Activated B cell treated with CpG ODN at 0.5 μM for 24 hours (primary cell): ENCODE measurements at regions of chr7 and their contacts with region 1.

Region 1: DNA sequence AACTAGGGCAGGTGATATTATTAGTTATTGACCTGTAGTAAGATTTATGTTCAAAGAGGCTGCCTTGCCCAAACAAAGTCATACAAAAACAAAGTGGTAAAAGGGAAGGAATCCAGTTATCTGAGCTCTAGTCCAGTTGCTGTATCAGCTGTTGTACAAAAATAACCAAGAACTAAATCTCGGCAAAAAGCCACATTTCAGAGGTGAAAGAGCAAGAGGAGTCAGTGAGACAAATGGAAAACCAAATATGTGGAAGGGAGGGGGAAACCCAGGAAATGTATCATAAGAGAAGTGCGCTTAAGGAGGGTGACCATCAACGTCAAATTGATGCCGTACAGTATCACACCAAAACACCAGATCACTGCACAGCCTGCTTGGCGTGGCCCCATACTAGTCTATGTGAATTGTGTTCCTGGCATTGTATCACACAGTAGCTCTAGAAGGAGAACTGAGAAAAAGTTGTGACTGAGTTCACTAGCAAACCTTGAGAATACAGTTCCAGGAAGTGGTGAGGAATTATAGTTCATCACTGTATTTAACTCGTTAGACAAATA is 6.4 kb downstream of the AGBL3 start:
- DNase-seq: no peak
- ATAC-seq: peak; percentile 95
- H3K4me3 Mint-ChIP-seq: peak overlapping the region; percentile 36
- H3K27ac Mint-ChIP-seq: peak overlapping the region; percentile 78
- H3K4me1 Mint-ChIP-seq: peaks cover 27% of the 10 kb centered on the region
- H3K27me3 Mint-ChIP-seq: no peaks in the 10 kb centered on the region
- CTCF ChIP-seq: no peak

Region 2: GRCh38 chr7:135160098-135160857 is 167.6 kb after region 1 on chr7:
- CTCF ChIA-PET with region 1: no interaction called
- POLR2A ChIA-PET with region 1: interaction called, 13 read pairs
- intact Hi-C with region 1: no loop called
- DNase-seq: no peak
- ATAC-seq: peak; percentile 20
- H3K4me3 Mint-ChIP-seq: peak overlapping the region; percentile 65
- H3K27ac Mint-ChIP-seq: peak overlapping the region; percentile 93
- H3K4me1 Mint-ChIP-seq: peaks cover 50% of the 10 kb centered on the region
- H3K27me3 Mint-ChIP-seq: no peaks in the 10 kb centered on the region
- CTCF ChIP-seq: no peak